ENCODE measurements at regions of chr3 and their contacts with region 1.

Region 1: GRCh38 chr3:17841190-17841828 is 98.9 kb upstream of the TBC1D5 start:
- DNase-seq: peak; percentile 67
- H3K4me3 Mint-ChIP-seq: no peak overlapping the region
- H3K27ac Mint-ChIP-seq: no peak overlapping the region
- H3K4me1 Mint-ChIP-seq: peaks cover 7% of the 10 kb centered on the region
- H3K27me3 Mint-ChIP-seq: no peaks in the 10 kb centered on the region
- CTCF ChIP-seq: peak; percentile 95

Region 2: DNA sequence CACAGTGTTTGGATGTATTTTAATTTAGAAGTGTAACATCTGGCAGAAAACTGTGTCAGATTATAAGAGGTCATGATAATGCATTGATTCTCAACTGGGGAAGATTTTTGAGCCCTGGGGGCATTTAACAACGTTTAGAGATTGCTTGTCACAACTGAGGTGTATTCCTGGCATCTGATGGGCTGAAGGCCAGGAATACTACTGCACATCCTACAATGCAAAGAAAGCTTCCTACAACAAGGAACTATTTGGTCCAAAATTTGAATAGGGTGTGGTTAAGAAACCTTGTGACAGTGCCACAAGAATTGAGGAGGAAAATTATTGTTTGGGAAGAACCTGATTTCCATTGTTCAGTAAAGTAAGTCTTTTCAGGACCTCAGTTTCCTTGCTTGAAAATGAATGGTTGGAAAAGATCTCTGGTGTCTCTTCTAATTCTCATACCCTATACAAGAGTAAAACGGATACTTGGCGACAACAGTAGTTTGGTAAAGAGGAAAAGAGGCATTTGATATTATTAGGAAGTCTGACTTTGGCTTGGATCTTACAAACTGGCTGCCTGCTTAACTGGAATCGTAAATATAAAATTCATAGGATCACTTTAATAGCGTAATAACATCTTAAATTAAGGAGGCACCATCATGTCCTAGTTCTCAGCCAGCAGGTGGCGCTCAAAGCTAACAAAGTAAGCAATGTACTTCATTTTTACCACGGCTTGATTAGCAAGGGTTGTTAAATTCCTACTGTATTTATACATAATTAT is 1240.3 kb before region 1 on chr3:
- CTCF ChIA-PET with region 1: no interaction called
- POLR2A ChIA-PET with region 1: no interaction called
- intact Hi-C with region 1: loop called (anchors 5 kb)
- DNase-seq: peak; percentile 80
- H3K4me3 Mint-ChIP-seq: no peak overlapping the region
- H3K27ac Mint-ChIP-seq: no peak overlapping the region
- H3K4me1 Mint-ChIP-seq: no peaks in the 10 kb centered on the region
- H3K27me3 Mint-ChIP-seq: peaks cover 54% of the 10 kb centered on the region
- CTCF ChIP-seq: peak; percentile 69

Region 3: GRCh38 chr3:17157713-17158112 is 683.6 kb before region 1 on chr3:
- CTCF ChIA-PET with region 1: no interaction called
- POLR2A ChIA-PET with region 1: no interaction called
- intact Hi-C with region 1: no loop called
- DNase-seq: no peak
- H3K4me3 Mint-ChIP-seq: no peak overlapping the region
- H3K27ac Mint-ChIP-seq: no peak overlapping the region
- H3K4me1 Mint-ChIP-seq: no peaks in the 10 kb centered on the region
- H3K27me3 Mint-ChIP-seq: no peaks in the 10 kb centered on the region
- CTCF ChIP-seq: no peak

Region 4: DNA sequence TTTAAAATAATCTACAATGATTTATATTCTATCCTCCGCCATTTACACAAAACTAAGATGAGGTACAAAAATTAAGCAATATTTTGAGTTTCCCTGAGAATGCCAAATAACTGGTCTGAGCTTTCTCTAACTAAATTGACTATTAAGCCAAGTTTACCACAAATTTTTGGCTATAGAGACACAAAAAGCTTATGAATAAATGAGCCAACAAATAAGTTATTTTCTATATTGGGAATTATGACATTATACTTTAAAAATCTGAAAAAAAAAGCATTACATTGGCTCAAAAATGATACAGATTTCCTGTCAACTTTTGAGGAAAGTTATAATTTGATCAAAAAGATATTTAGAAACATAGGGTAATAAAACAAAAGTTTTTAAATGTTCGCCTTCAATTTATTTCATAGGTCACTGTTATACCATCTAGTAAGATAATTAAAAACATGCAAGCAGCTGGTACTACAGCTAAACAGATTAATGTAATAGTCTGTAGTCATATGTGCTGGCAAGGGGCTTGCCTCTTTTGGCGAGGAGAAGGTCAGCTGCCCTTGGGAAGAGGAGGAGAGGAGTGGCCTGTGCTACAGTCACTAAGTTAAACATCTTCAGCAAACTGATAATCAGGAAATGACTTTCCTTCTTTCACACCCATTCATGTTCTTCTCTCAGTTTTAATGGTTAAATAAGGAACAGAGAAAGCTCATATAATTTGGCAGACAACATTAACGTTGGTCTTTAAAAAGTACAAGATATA is 417.3 kb before region 1 on chr3:
- CTCF ChIA-PET with region 1: interaction called, 124 read pairs
- POLR2A ChIA-PET with region 1: interaction called, 3 read pairs
- intact Hi-C with region 1: no loop called
- DNase-seq: no peak
- H3K4me3 Mint-ChIP-seq: no peak overlapping the region
- H3K27ac Mint-ChIP-seq: no peak overlapping the region
- H3K4me1 Mint-ChIP-seq: no peaks in the 10 kb centered on the region
- H3K27me3 Mint-ChIP-seq: no peaks in the 10 kb centered on the region
- CTCF ChIP-seq: no peak

Region 5: DNA sequence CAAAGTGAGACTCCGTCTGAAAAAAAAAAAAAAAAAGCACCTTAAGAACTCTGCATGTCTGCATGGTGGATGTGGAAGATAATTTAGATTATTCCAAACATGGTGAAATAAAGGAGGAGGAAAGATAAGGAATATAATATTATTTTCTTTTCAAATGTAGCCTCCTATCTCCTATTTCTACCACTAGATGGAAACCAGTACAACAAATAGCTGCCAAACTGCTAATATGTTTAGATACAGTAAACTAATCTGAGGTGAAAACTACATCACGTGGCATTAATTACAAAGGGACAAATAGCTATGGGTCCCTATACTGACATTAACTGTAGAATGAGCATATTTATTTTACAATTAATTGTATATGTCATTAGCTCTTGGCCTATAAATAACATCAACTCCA is 296.7 kb before region 1 on chr3:
- CTCF ChIA-PET with region 1: interaction called, 22 read pairs
- POLR2A ChIA-PET with region 1: no interaction called
- intact Hi-C with region 1: loop called (anchors 1 kb)
- DNase-seq: no peak
- H3K4me3 Mint-ChIP-seq: no peak overlapping the region
- H3K27ac Mint-ChIP-seq: no peak overlapping the region
- H3K4me1 Mint-ChIP-seq: no peaks in the 10 kb centered on the region
- H3K27me3 Mint-ChIP-seq: no peaks in the 10 kb centered on the region
- CTCF ChIP-seq: no peak

Region 6: GRCh38 chr3:17686613-17687012 is 154.7 kb before region 1 on chr3:
- CTCF ChIA-PET with region 1: interaction called, 5 read pairs
- POLR2A ChIA-PET with region 1: no interaction called
- intact Hi-C with region 1: loop called (anchors 1 kb)
- DNase-seq: peak; percentile 35
- H3K4me3 Mint-ChIP-seq: no peak overlapping the region
- H3K27ac Mint-ChIP-seq: no peak overlapping the region
- H3K4me1 Mint-ChIP-seq: peaks cover 5% of the 10 kb centered on the region
- H3K27me3 Mint-ChIP-seq: no peaks in the 10 kb centered on the region
- CTCF ChIP-seq: peak; percentile 45

Region 7: DNA sequence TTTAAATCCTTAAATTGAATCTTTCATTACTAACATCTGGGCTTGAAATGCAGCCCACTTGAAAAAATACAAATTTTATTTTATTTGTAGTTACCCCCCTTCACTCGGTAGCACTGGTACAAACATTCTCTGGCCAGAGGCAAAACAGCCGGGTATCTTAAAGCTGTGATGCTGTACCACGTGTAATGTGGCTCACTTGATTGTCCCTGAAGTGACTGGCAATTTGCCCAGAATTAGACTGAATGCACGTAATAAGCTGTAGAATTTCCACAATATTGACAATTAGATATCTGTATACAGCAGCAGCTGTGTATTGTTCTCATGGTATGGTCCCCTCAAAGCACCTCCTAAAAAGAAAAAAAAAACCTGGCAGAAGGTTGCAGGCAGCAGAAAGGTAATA is 93.9 kb after region 1 on chr3:
- CTCF ChIA-PET with region 1: no interaction called
- POLR2A ChIA-PET with region 1: no interaction called
- intact Hi-C with region 1: no loop called
- DNase-seq: no peak
- H3K4me3 Mint-ChIP-seq: no peak overlapping the region
- H3K27ac Mint-ChIP-seq: no peak overlapping the region
- H3K4me1 Mint-ChIP-seq: no peaks in the 10 kb centered on the region
- H3K27me3 Mint-ChIP-seq: no peaks in the 10 kb centered on the region
- CTCF ChIP-seq: no peak

Region 8: GRCh38 chr3:18295171-18295920 is 454.0 kb after region 1 on chr3:
- CTCF ChIA-PET with region 1: interaction called, 10 read pairs
- POLR2A ChIA-PET with region 1: no interaction called
- intact Hi-C with region 1: loop called (anchors 2 kb)
- DNase-seq: peak; percentile 89
- H3K4me3 Mint-ChIP-seq: no peak overlapping the region
- H3K27ac Mint-ChIP-seq: peak overlapping the region; percentile 82
- H3K4me1 Mint-ChIP-seq: peaks cover 6% of the 10 kb centered on the region
- H3K27me3 Mint-ChIP-seq: no peaks in the 10 kb centered on the region
- CTCF ChIP-seq: peak; percentile 90

Measured in MCF 10A (cell line).